ENCODE measurements at regions of chr1 and their contacts with region 1.

Region 1: GRCh38 chr1:198937231-198938031 is 298.6 kb downstream of the PTPRC start:
- DNase-seq: peak; percentile 71
- H3K4me3 Mint-ChIP-seq: no peak overlapping the region
- H3K27ac Mint-ChIP-seq: peak overlapping the region; percentile 93
- H3K4me1 Mint-ChIP-seq: peaks cover 33% of the 10 kb centered on the region
- H3K27me3 Mint-ChIP-seq: no peaks in the 10 kb centered on the region

Region 2: GRCh38 chr1:198771563-198772153 is 165.8 kb before region 1 on chr1:
- intact Hi-C with region 1: loop called (anchors 5 kb)
- DNase-seq: no peak
- H3K4me3 Mint-ChIP-seq: no peak overlapping the region
- H3K27ac Mint-ChIP-seq: no peak overlapping the region
- H3K4me1 Mint-ChIP-seq: peaks cover 11% of the 10 kb centered on the region
- H3K27me3 Mint-ChIP-seq: peaks cover 5% of the 10 kb centered on the region

Region 3: DNA sequence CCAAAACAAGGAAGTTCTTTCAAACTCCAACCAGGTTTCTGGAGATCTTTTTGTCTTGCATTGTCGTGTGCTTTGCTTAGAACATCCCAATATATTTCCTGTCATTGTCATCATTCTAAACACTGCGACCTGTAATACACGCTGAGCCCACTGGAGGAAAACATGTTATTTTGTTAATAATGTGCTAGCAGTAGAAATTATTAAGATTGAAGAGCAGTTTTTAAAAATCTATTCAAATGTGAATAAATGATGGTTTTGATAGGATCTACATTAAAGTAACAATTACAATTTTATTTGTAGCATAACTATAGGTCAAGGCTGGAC is 30.0 kb before region 1 on chr1:
- intact Hi-C with region 1: loop called (anchors 2 kb)
- DNase-seq: no peak
- H3K4me3 Mint-ChIP-seq: peak overlapping the region; percentile 27
- H3K27ac Mint-ChIP-seq: peak overlapping the region; percentile 86
- H3K4me1 Mint-ChIP-seq: peaks cover 68% of the 10 kb centered on the region
- H3K27me3 Mint-ChIP-seq: no peaks in the 10 kb centered on the region

Region 4: GRCh38 chr1:199009447-199009846 is 72.0 kb after region 1 on chr1:
- intact Hi-C with region 1: loop called (anchors 1 kb)
- DNase-seq: peak; percentile 8
- H3K4me3 Mint-ChIP-seq: peak overlapping the region; percentile 75
- H3K27ac Mint-ChIP-seq: peak overlapping the region; percentile 76
- H3K4me1 Mint-ChIP-seq: peaks cover 50% of the 10 kb centered on the region
- H3K27me3 Mint-ChIP-seq: no peaks in the 10 kb centered on the region

Region 5: DNA sequence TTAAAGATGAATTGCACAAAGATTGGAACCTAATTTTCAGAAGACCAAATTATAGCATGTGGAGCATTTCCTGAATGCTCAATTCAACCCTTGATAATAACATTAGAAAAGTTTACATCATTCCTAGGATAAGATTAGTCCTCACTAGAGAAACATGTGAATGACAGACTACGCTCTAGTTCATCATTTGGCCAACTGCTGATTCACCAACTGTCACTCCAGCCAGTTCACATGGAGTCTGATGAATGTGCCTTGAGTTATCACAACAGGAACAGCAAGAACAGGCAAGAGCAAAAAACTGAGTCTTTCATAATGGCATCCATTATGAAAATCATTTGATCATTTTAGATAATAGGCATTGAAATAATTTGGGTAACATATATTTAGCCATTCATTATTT is 117.3 kb after region 1 on chr1:
- intact Hi-C with region 1: no loop called
- DNase-seq: no peak
- H3K4me3 Mint-ChIP-seq: no peak overlapping the region
- H3K27ac Mint-ChIP-seq: no peak overlapping the region
- H3K4me1 Mint-ChIP-seq: peaks cover 10% of the 10 kb centered on the region
- H3K27me3 Mint-ChIP-seq: no peaks in the 10 kb centered on the region

Region 6: GRCh38 chr1:199113265-199113869 is 175.9 kb after region 1 on chr1:
- intact Hi-C with region 1: loop called (anchors 2 kb)
- DNase-seq: peak; percentile 58
- H3K4me3 Mint-ChIP-seq: no peak overlapping the region
- H3K27ac Mint-ChIP-seq: no peak overlapping the region
- H3K4me1 Mint-ChIP-seq: peaks cover 31% of the 10 kb centered on the region
- H3K27me3 Mint-ChIP-seq: no peaks in the 10 kb centered on the region

Region 7: DNA sequence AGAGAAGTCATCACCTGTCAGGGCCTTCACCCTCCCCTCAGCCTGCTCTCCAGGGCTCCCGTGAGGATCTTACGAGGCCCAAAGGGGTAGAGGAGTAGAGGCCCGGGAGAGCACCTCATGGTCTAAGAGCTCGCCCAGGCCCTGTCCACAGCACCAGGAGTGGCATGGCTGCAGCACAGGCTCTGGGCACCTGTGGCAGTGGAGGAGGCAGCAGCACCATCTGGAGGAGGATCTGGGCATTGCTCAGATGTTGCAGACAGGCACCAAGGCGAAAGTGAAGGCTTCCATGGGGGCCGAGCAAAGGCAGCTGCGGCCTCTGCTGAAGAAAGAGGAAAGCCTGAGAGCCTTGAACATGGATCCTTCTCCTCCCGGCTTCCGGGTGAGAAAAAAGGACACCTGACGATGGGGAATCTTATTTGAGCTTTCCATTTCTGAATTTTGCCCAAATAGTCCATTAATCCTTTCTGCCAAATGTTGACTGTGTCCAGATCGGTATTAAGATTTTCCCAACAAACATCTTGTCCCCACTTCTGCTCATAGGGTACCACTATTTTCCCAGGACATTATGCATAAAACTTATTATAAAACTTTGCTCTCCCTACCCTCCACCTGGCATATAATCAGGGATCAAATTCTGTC is 306.1 kb after region 1 on chr1:
- intact Hi-C with region 1: loop called (anchors 2 kb)
- DNase-seq: peak; percentile 70
- H3K4me3 Mint-ChIP-seq: no peak overlapping the region
- H3K27ac Mint-ChIP-seq: no peak overlapping the region
- H3K4me1 Mint-ChIP-seq: peaks cover 18% of the 10 kb centered on the region
- H3K27me3 Mint-ChIP-seq: peaks cover 19% of the 10 kb centered on the region

Region 8: GRCh38 chr1:199279872-199280645 is 342.6 kb after region 1 on chr1:
- intact Hi-C with region 1: no loop called
- DNase-seq: no peak
- H3K4me3 Mint-ChIP-seq: no peak overlapping the region
- H3K27ac Mint-ChIP-seq: no peak overlapping the region
- H3K4me1 Mint-ChIP-seq: peaks cover 13% of the 10 kb centered on the region
- H3K27me3 Mint-ChIP-seq: peaks cover 1% of the 10 kb centered on the region

Measured in activated T-helper 1 cell treated with anti-CD3 and anti-CD28 coated beads, Interleukin-12 subunit alpha, Interleukin-12 subunit beta, Interleukin-2, Interleukin-4 antibody, amounts not matched to agents 30 ng/mL and 10 ng/mL and 1 ng/mL, durations not matched to agents 14 hours and 24 hours and 36 hours (primary cell).